ENCODE measurements at regions of chr3 and their contacts with region 1.

Region 1: DNA sequence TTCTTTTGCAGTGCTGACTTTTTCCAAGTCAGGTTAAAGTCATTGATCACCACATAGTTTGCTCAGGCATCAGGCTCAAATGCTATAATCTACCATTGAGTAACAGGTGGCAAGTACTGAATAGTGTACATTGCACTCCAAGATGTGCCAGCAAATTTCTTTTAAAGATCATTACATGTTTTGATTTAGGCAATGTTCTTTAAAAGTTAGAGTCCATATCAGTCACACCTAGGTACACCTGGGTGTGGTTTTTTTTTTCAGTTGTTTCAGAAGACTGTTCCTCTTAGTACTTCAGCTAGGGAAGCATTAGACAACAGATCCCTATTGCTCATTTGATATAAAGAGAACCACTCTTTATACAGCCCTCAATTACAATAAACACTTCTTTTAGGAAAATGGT is 10.6 kb upstream of the SLC4A7 start:
- DNase-seq: no peak
- ATAC-seq: no peak
- H3K4me3 ChIP-seq: no peak overlapping the region
- H3K27ac ChIP-seq: no peak overlapping the region
- H3K4me1 ChIP-seq: no peaks in the 10 kb centered on the region
- H3K27me3 ChIP-seq: no peaks in the 10 kb centered on the region
- CTCF ChIP-seq: no peak

Region 2: DNA sequence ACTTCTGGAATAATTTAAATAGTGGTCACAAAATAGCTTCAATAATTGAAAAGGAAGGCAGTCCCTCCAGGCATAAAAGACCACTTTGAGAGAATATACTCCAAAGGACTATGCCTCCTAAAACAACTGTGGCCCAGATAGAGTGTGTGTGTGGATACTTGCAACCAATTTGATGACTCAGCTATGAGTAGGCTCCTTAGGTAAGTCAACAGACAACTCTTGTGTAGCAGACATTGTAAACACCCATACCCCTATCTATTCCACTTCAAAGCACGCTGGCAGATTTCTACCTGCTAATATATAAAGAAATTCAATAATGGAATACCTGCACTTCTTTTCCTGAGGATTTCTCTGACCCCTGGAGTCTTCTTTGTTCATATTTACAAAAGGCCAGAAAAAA is 380.1 kb before region 1 on chr3:
- intact Hi-C with region 1: no loop called
- DNase-seq: no peak
- ATAC-seq: no peak
- H3K4me3 ChIP-seq: no peak overlapping the region
- H3K27ac ChIP-seq: no peak overlapping the region
- H3K4me1 ChIP-seq: no peaks in the 10 kb centered on the region
- H3K27me3 ChIP-seq: no peaks in the 10 kb centered on the region
- CTCF ChIP-seq: no peak

Region 3: GRCh38 chr3:27533718-27534573 is 39.2 kb after region 1 on chr3:
- intact Hi-C with region 1: no loop called
- DNase-seq: peak; percentile 23 to 40
- ATAC-seq: peak; percentile 46 to 90 (median 72)
- H3K4me3 ChIP-seq: no peak overlapping the region
- H3K27ac ChIP-seq: peak overlapping the region in 8 of 10 donors; percentile 17 to 88 (median 54)
- H3K4me1 ChIP-seq: peaks cover 0 to 38% (median 10%) of the 10 kb centered on the region in 9 donors
- H3K27me3 ChIP-seq: no peaks in the 10 kb centered on the region
- CTCF ChIP-seq: peak in 3 of 9 donors; percentile 8 to 26 (median 10)

Region 4: GRCh38 chr3:27659279-27660021 is 164.7 kb after region 1 on chr3:
- intact Hi-C with region 1: loop called in 1 of 10 experiments (anchors 10 kb)
- DNase-seq: peak; percentile 38 to 62
- ATAC-seq: peak in 5 of 8 donors; percentile 33 to 71 (median 66)
- H3K4me3 ChIP-seq: no peak overlapping the region
- H3K27ac ChIP-seq: no peak overlapping the region
- H3K4me1 ChIP-seq: no peaks in the 10 kb centered on the region
- H3K27me3 ChIP-seq: no peaks in the 10 kb centered on the region
- CTCF ChIP-seq: peak; percentile 67 to 84 (median 79)